HEK293 (cell line): ENCODE measurements at regions of chr16 and their contacts with region 1.

Region 1: DNA sequence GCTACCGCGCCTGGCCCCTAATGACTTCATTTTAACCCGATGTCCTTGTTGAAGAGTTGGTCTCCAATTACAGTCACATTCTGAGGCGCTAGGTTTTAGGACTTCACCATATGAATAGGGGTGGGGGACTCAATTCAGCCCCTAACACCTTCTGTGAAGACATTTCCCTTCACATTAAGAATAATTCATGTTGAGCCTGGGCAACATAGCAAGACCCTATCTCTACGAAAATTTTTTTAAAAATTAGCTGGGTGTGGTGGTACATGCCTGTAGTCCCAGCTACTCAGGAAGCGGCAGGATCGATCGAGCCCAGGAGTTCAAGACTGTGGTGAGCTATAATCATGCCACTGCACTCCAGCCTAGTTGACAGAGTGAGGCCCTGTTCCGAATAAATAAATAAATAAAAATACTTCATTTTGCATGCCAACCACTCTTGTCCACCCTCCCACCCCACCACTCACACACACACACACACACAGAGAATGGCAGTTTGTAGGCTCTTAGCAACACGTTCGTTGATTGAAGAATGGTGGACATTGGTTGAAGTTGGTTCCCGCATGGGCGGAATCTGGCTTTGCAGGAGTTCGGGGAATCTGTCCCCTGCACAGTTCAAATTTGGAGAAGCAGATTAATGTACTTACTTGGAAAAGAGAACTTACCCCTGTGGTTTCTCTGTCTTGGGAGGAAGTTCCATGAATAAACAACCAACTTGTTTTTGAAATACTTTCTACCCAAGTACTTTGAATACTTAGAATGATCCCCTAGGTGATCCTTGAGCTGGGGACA is 27.8 kb upstream of the TVP23A start:
- H3K4me3 ChIP-seq: no peak overlapping the region
- H3K27ac ChIP-seq: no peak overlapping the region
- H3K4me1 ChIP-seq: no peaks in the 10 kb centered on the region
- CTCF ChIP-seq: no peak

Region 2: GRCh38 chr16:10683170-10683569 is 163.2 kb before region 1 on chr16:
- CTCF ChIA-PET with region 1: no interaction called
- POLR2A ChIA-PET with region 1: interaction called, 10 read pairs
- H3K4me3 ChIP-seq: no peak overlapping the region
- H3K27ac ChIP-seq: no peak overlapping the region
- H3K4me1 ChIP-seq: no peaks in the 10 kb centered on the region
- CTCF ChIP-seq: no peak

Region 3: DNA sequence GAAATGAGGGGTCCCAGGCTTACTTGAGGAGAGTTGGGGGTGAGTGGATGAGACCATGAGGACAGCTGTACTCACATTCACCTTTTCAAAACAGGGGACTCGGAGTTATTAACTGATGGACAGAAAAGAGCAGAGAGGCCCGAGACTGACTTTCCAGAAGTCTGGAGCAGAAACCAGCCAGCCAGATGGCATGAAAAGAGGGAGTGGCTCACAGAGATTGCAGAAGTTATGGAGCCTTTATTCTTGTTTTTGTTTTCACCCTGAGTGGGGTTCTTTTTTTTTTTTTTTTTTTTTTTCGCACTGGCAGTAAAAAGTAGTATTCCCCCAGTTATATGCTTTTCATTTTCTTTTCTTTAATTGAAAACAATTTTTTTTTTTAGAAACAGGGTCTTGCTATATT is 46.7 kb before region 1 on chr16:
- CTCF ChIA-PET with region 1: no interaction called
- POLR2A ChIA-PET with region 1: no interaction called
- H3K4me3 ChIP-seq: no peak overlapping the region
- H3K27ac ChIP-seq: no peak overlapping the region
- H3K4me1 ChIP-seq: no peaks in the 10 kb centered on the region
- CTCF ChIP-seq: no peak